Common myeloid progenitor, CD34-positive (primary cell): ENCODE measurements at regions of chr6 and their contacts with region 1.

Region 1: GRCh38 chr6:52399511-52400312 is 20.4 kb upstream of the EFHC1 start:
- DNase-seq: peak; percentile 48 to 60 (median 54)
- H3K4me3 ChIP-seq: no peak overlapping the region
- H3K27ac ChIP-seq: no peak overlapping the region
- H3K4me1 ChIP-seq: peaks cover 14 to 34% (median 31%) of the 10 kb centered on the region in 4 experiments
- H3K27me3 ChIP-seq: no peaks in the 10 kb centered on the region

Region 2: DNA sequence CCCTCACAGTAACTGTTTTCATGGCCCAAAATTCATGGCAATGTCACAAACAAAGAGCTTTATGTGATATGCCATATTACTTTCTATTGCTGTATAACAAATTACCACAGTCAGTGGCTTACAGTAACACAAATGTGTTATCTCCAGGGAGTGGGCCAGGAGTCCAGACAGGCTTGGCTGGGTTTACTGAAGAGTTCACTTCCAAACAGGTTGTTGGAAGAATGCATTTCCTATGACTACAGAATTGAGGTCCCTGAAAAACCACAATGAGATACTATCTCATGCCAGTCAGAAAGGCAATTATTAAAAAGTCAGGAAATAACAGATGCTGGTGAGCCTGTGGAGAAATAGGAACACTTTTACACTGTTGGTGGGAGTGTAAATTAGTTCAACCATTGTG is 744.2 kb before region 1 on chr6:
- CTCF ChIA-PET with region 1: no interaction called
- POLR2A ChIA-PET with region 1: no interaction called
- DNase-seq: no peak
- H3K4me3 ChIP-seq: no peak overlapping the region
- H3K27ac ChIP-seq: no peak overlapping the region
- H3K4me1 ChIP-seq: no peaks in the 10 kb centered on the region
- H3K27me3 ChIP-seq: peaks cover 0 to 2% (median 0%) of the 10 kb centered on the region in 5 experiments

Region 3: DNA sequence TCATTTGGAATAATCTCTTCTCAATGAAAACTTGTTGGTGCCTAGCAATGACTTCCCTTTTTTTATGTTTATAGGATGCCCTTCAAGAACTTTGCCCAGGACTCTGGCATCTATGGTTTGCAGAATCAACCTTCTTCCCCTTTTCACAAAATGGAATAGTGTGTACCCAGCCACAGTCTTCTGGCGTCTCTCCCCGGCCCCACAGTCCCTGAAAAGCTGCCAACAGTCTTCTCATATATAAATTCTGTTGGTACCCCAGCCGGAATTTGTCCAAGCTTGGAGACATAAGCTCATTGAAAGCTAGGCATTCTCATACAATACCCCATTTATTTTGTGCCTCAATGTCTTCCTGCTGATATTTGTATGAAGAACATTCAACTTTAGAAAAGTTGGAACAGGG is 88.8 kb before region 1 on chr6:
- CTCF ChIA-PET with region 1: interaction called, 10 read pairs
- POLR2A ChIA-PET with region 1: no interaction called
- DNase-seq: peak; percentile 66 to 94 (median 90)
- H3K4me3 ChIP-seq: no peak overlapping the region
- H3K27ac ChIP-seq: no peak overlapping the region
- H3K4me1 ChIP-seq: peaks cover 7 to 42% (median 32%) of the 10 kb centered on the region in 4 experiments
- H3K27me3 ChIP-seq: no peaks in the 10 kb centered on the region

Region 4: GRCh38 chr6:52346503-52346902 is 53.2 kb before region 1 on chr6:
- CTCF ChIA-PET with region 1: no interaction called
- POLR2A ChIA-PET with region 1: no interaction called
- DNase-seq: no peak
- H3K4me3 ChIP-seq: no peak overlapping the region
- H3K27ac ChIP-seq: no peak overlapping the region
- H3K4me1 ChIP-seq: peaks cover 5 to 9% (median 7%) of the 10 kb centered on the region in 4 experiments
- H3K27me3 ChIP-seq: no peaks in the 10 kb centered on the region

Region 5: DNA sequence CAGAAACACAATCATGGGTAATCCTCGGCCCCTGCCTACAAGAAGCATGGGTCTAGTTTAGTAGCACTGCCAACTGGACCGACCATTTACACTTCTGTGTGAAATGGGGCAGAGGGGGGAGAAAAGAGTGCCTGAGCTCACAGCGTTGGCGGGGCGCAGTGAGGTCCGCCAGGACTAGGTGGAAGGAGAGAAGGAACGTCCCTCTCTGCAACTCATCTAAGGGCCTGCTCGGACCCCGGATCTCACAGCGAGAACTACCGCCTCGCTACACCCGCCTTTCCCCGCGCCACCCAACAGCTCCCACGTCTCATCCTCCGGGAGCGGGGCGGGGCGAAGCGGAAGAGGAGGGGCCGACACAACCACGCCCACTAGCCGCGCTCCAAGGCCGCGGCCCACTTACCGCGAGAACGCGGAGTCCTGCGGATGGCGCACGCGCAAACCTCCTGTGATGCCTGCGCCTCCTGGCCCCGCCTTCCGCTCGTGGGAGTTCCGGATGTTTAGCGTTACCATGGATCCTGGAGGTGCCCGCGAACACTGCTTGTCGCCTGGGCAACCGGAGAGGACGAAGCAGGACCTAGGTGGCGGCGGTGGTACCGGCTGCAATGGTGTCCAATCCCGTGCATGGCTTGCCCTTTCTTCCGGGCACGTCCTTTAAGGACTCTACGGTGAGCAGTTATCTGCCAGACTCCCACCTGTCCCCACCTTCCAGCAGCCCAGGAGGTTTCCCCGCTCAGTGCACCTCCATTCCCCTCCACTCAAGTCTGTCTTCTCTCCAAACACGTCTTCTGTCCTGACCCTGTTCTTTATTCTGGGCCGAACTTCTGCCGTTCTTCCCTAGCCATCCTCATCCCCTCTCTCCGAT is 20.3 kb after region 1 on chr6 and contains the start of gene EFHC1:
- CTCF ChIA-PET with region 1: interaction called, 64 read pairs
- POLR2A ChIA-PET with region 1: interaction called, 3 read pairs
- DNase-seq: peak; percentile 97 to 98 (median 97)
- H3K4me3 ChIP-seq: peak within 1 kb of the TSS; percentile 76 to 99 (median 87)
- H3K27ac ChIP-seq: peak within 1 kb of the TSS; percentile 69 to 91
- H3K4me1 ChIP-seq: peaks cover 12 to 55% (median 29%) of the 10 kb centered on the region in 4 experiments
- H3K27me3 ChIP-seq: no peaks in the 10 kb centered on the region

Region 6: DNA sequence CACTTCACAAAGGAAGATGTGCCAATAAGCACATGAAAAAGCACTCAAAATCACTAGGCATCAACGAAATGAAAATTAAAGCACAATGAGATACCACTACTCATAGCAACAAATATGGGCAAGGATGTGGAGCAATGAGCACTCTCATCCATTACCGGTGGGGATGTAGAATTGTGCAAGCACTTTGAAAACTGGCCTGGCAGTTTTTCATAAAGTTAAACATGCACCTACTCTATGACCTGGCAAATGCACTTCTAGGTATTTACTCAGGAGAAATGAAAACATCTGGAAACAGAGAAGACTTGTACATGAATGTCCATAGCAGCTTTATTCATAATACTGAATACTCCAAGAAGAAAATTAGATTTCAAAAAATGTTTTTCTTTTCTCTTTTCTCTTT is 237.1 kb after region 1 on chr6:
- CTCF ChIA-PET with region 1: no interaction called
- POLR2A ChIA-PET with region 1: no interaction called
- DNase-seq: no peak
- H3K4me3 ChIP-seq: no peak overlapping the region
- H3K27ac ChIP-seq: no peak overlapping the region
- H3K4me1 ChIP-seq: peaks cover 9 to 25% (median 16%) of the 10 kb centered on the region in 4 experiments
- H3K27me3 ChIP-seq: no peaks in the 10 kb centered on the region